A673 (cell line): ENCODE measurements at regions of chr14 and their contacts with region 1.

Region 1: DNA sequence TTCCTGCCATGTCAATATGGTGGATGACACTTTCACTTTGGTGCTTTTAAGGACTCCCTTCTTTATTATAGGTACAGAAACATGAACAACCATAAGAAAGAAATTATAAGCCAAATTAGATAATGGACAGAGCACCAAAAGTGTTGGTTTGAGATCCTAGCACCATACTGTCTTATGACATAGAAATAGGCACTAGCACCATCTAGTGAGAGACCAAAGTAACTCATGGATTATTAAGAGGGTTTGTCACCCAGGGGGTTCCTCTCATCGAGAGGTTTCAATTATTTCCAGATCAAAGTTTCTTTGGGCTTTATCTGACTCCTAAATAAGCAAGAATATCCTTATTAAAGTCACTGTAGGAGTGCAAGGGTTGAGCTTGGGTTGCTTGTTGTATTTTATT is 153.0 kb upstream of the DIO2 start:
- DNase-seq: peak; percentile 48
- H3K4me3 ChIP-seq: no peak overlapping the region
- H3K27ac ChIP-seq: no peak overlapping the region
- H3K4me1 ChIP-seq: no peaks in the 10 kb centered on the region
- H3K27me3 ChIP-seq: no peaks in the 10 kb centered on the region
- CTCF ChIP-seq: peak; percentile 57

Region 2: GRCh38 chr14:78933948-78934524 is 1430.2 kb before region 1 on chr14:
- CTCF ChIA-PET with region 1: no interaction called
- POLR2A ChIA-PET with region 1: no interaction called
- intact Hi-C with region 1: loop called (anchors 10 kb)
- DNase-seq: peak; percentile 39
- H3K4me3 ChIP-seq: no peak overlapping the region
- H3K27ac ChIP-seq: no peak overlapping the region
- H3K4me1 ChIP-seq: no peaks in the 10 kb centered on the region
- H3K27me3 ChIP-seq: peaks cover 3% of the 10 kb centered on the region
- CTCF ChIP-seq: peak; percentile 64

Region 3: GRCh38 chr14:78959674-78960264 is 1404.5 kb before region 1 on chr14:
- CTCF ChIA-PET with region 1: no interaction called
- POLR2A ChIA-PET with region 1: no interaction called
- intact Hi-C with region 1: loop called (anchors 10 kb)
- DNase-seq: peak; percentile 74
- H3K4me3 ChIP-seq: no peak overlapping the region
- H3K27ac ChIP-seq: no peak overlapping the region
- H3K4me1 ChIP-seq: no peaks in the 10 kb centered on the region
- H3K27me3 ChIP-seq: peaks cover 5% of the 10 kb centered on the region
- CTCF ChIP-seq: peak; percentile 87

Region 4: GRCh38 chr14:79011091-79011919 is 1353.0 kb before region 1 on chr14:
- CTCF ChIA-PET with region 1: no interaction called
- POLR2A ChIA-PET with region 1: no interaction called
- intact Hi-C with region 1: loop called (anchors 5 kb)
- DNase-seq: peak; percentile 46
- H3K4me3 ChIP-seq: no peak overlapping the region
- H3K27ac ChIP-seq: no peak overlapping the region
- H3K4me1 ChIP-seq: no peaks in the 10 kb centered on the region
- H3K27me3 ChIP-seq: no peaks in the 10 kb centered on the region
- CTCF ChIP-seq: peak; percentile 48

Region 5: DNA sequence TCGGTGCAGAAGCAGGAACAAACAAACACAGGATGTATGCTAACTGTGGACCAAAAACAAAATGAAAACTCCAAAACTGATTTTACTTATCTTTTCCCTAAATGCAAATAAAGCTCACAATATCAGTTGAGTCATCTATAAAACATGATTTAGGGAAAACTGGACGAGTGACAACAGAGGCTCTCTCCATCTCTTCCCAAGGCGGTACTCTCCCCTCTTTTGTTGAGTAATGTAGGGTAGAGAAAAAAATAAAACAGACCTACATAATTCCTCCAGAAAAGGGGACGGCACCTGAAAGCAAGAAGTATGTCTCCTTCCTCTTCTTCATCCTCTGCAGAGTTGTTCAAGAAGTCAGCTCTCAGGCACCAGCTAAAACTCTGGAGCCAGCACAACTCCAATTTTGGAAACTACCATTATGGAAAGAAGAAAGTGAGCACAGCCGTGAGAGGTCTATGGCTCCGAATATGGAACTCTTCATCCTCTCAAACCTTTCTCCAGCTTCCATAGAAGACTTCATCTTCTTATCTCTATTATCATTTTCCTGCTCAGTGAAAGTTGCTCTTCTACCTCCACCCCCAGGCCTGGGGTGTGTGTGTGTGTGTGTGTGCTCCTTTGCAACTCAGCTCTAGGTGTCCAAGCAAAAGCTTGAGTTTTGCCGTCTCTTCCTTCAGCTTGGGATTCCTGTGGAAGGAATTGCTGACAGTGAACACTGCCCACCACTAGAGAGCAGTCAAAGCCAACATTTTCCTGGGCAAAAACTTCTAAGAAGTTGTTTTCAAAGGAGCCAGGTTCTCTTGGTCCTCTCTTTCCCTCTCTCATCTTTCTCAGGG is 308.4 kb before region 1 on chr14:
- CTCF ChIA-PET with region 1: no interaction called
- POLR2A ChIA-PET with region 1: no interaction called
- intact Hi-C with region 1: loop called (anchors 1 kb)
- DNase-seq: peak; percentile 55
- H3K4me3 ChIP-seq: no peak overlapping the region
- H3K27ac ChIP-seq: no peak overlapping the region
- H3K4me1 ChIP-seq: no peaks in the 10 kb centered on the region
- H3K27me3 ChIP-seq: no peaks in the 10 kb centered on the region
- CTCF ChIP-seq: peak; percentile 74

Region 6: DNA sequence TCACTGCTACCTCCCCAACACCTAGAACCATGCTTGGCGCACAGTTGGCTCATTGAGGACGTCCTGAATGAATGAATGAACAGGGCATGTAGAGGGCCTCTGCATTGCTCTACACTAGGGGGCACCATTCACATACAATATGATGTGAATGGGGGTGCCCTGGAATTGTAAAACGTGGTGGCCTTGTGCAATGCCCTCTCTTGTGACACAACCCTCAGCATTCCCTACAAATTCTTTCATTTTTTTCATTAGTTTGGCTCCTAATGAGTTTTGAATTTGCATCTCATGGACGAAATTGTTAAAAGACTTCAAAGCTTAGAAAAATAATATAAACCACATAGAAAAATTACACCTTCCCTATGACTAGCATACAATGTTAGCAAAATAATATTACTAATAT is 150.7 kb before region 1 on chr14:
- CTCF ChIA-PET with region 1: no interaction called
- POLR2A ChIA-PET with region 1: no interaction called
- intact Hi-C with region 1: loop called (anchors 1 kb)
- DNase-seq: peak; percentile 72
- H3K4me3 ChIP-seq: no peak overlapping the region
- H3K27ac ChIP-seq: no peak overlapping the region
- H3K4me1 ChIP-seq: no peaks in the 10 kb centered on the region
- H3K27me3 ChIP-seq: no peaks in the 10 kb centered on the region
- CTCF ChIP-seq: peak; percentile 75

Region 7: DNA sequence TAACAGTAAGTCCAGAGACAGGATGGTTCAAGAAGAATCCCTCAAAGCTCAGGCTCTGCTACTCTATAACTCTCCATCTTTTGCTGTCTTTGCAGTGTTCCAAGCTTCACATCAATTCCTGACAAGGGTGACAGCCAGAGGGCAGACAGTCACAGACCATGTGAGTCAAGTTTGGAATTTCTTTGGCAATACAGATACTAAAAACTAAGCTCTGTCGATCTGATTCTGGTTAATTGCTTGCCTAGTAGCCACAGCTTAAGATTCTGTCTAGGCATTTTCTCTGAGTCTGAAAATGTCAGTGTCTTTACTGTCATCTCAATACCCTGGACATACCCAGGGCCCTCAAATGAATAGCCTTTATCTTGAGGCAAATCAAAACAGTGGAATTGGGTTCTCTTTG is 423.6 kb after region 1 on chr14:
- CTCF ChIA-PET with region 1: no interaction called
- POLR2A ChIA-PET with region 1: no interaction called
- intact Hi-C with region 1: no loop called
- DNase-seq: no peak
- H3K4me3 ChIP-seq: no peak overlapping the region
- H3K27ac ChIP-seq: no peak overlapping the region
- H3K4me1 ChIP-seq: no peaks in the 10 kb centered on the region
- H3K27me3 ChIP-seq: no peaks in the 10 kb centered on the region
- CTCF ChIP-seq: no peak

Region 8: DNA sequence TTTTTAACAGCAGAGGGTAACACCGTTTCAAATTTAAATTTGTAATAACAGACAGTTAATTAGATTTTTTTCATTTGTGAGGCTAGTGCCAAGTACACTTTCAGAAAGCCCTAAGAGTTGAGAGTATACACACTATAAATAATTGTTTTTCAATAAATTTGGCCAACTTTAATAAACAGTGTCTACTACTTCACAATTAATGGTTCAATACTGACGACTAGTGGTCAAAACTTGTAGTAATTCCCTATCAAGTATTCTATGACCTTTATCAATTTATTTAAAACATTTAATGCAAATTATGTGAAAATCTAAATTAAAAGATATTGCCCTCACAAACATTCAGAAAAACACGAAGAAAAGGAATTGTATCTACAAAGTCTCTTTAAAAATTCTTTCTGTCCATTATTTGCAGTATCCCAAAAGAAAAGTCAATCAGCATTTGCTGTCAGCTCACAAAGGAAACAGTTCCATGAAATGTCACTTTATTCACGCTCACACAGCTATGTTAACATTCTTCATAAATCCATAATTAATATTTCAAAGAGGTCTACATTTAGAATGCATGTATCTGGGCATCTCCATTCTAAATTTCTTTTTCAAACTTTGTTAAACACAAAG is 486.0 kb after region 1 on chr14:
- CTCF ChIA-PET with region 1: no interaction called
- POLR2A ChIA-PET with region 1: no interaction called
- intact Hi-C with region 1: loop called (anchors 5 kb)
- DNase-seq: peak; percentile 51
- H3K4me3 ChIP-seq: no peak overlapping the region
- H3K27ac ChIP-seq: no peak overlapping the region
- H3K4me1 ChIP-seq: no peaks in the 10 kb centered on the region
- H3K27me3 ChIP-seq: no peaks in the 10 kb centered on the region
- CTCF ChIP-seq: peak; percentile 73